Activated B cell treated with CpG ODN at 0.5 μM for 24 hours (primary cell): ENCODE measurements at regions of chr6 and their contacts with region 1.

Region 1: GRCh38 chr6:143026696-143027449 is 33.8 kb upstream of the AIG1 start:
- DNase-seq: peak; percentile 26
- ATAC-seq: peak; percentile 68
- H3K4me3 Mint-ChIP-seq: no peak overlapping the region
- H3K27ac Mint-ChIP-seq: no peak overlapping the region
- H3K4me1 Mint-ChIP-seq: peaks cover 5% of the 10 kb centered on the region
- H3K27me3 Mint-ChIP-seq: no peaks in the 10 kb centered on the region
- CTCF ChIP-seq: no peak

Region 2: DNA sequence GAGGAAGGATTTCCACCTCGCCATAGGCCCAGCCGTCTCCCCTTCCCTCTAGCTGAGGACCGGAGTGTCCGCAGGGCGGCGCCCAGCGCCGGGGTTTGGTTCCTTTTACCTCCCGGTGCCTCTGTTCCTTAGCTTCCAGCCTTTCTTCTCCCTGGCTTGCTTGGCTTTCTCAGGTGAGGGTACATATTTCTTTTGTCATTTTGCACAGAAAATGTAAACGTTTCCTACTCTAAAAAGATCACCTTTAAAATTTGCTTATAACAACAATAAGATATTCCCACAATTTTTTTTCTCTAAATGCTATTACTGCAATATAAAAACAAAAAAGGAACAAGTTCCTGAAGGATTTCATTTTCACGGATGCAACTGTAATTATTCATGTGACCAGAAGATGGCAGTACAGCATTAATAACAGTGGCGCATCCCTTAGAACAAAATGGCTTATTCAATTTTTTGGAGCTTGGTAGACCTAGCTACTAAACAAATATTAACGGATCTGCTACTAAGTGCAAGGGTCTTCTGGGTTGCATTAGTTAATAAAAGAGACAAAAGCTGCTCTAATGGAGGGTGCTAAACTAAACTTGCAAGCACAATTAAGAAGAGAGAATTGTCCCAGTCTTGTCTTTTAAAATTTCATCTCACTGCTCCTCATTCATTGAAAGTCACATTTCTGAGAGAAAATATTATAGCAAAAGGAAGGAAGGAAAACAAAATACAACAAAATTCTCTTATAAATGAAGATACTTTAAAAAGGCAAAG is 552.2 kb before region 1 on chr6:
- CTCF ChIA-PET with region 1: interaction called, 5 read pairs
- POLR2A ChIA-PET with region 1: no interaction called
- intact Hi-C with region 1: loop called (anchors 2 kb)
- DNase-seq: no peak
- ATAC-seq: peak; percentile 54
- H3K4me3 Mint-ChIP-seq: no peak overlapping the region
- H3K27ac Mint-ChIP-seq: no peak overlapping the region
- H3K4me1 Mint-ChIP-seq: no peaks in the 10 kb centered on the region
- H3K27me3 Mint-ChIP-seq: peaks cover 3% of the 10 kb centered on the region
- CTCF ChIP-seq: peak; percentile 81

Region 3: GRCh38 chr6:142566628-142567396 is 460.1 kb before region 1 on chr6:
- CTCF ChIA-PET with region 1: interaction called, 3 read pairs
- POLR2A ChIA-PET with region 1: no interaction called
- intact Hi-C with region 1: loop called (anchors 1 kb)
- DNase-seq: no peak
- ATAC-seq: peak; percentile 66
- H3K4me3 Mint-ChIP-seq: no peak overlapping the region
- H3K27ac Mint-ChIP-seq: no peak overlapping the region
- H3K4me1 Mint-ChIP-seq: no peaks in the 10 kb centered on the region
- H3K27me3 Mint-ChIP-seq: no peaks in the 10 kb centered on the region
- CTCF ChIP-seq: peak; percentile 79

Region 4: GRCh38 chr6:142746524-142746923 is 280.3 kb before region 1 on chr6:
- CTCF ChIA-PET with region 1: interaction called, 45 read pairs
- POLR2A ChIA-PET with region 1: interaction called, 3 read pairs
- intact Hi-C with region 1: loop called (anchors 1 kb)
- DNase-seq: no peak
- ATAC-seq: peak; percentile 58
- H3K4me3 Mint-ChIP-seq: no peak overlapping the region
- H3K27ac Mint-ChIP-seq: no peak overlapping the region
- H3K4me1 Mint-ChIP-seq: peaks cover 11% of the 10 kb centered on the region
- H3K27me3 Mint-ChIP-seq: peaks cover 3% of the 10 kb centered on the region
- CTCF ChIP-seq: no peak